ENCODE measurements at regions of chr9 and their contacts with region 1.

Region 1: DNA sequence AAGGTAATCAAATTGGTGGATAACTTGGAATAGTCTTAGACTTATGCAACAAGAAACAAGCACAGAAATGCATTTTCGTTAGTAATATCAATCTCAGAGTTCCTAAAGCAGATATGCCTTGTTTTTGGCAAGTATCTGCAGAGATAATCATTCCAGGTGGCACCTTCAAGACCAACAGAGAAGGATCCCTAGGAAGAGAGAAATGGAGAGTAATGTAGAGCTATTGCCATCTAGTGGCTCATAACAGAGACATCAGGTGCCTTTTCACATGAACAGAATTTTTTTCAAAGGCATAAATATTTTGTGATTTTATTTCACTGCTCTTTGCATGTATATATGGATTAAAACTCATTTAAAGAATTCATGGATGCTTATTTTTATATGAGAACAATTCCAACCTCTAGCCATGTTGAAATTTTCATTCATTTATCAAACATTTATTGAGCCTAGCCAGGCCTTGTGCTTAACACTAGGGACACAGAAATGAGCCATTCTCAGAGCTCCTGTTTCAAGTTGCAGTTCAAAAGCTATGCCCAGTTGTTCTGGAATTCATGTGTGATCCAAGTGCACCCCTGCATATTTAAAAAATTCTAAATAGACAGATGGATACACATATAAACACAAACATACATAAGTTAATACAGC is 117.5 kb upstream of the OR13F1 start:
- DNase-seq: no peak
- ATAC-seq: no peak
- H3K4me3 ChIP-seq: no peak overlapping the region
- H3K27ac ChIP-seq: no peak overlapping the region
- H3K4me1 ChIP-seq: peaks cover 0 to 8% of the 10 kb centered on the region in 2 donors
- H3K27me3 ChIP-seq: no peaks in the 10 kb centered on the region

Region 2: DNA sequence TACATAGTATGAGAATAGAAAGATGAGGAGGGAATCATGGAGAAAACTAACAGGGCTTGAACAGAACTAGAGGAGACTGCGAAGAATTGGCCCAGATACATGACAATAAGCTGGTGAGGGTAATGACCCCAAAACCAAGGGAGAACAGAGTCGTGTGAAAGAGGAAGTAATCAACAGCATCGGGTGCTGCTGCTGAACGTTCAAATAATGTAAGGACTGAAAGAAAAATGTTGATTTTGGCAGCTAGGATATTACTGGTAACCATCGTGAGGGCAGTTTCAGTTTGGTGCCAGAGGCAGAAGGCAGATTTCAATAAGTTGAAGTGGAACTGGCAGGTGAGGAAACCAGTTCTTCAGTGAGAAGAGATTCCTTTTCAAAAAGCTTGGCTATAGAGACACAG is 359.3 kb before region 1 on chr9:
- intact Hi-C with region 1: loop called (anchors 10 kb)
- DNase-seq: no peak
- ATAC-seq: no peak
- H3K4me3 ChIP-seq: no peak overlapping the region
- H3K27ac ChIP-seq: no peak overlapping the region
- H3K4me1 ChIP-seq: no peaks in the 10 kb centered on the region
- H3K27me3 ChIP-seq: no peaks in the 10 kb centered on the region

Region 3: DNA sequence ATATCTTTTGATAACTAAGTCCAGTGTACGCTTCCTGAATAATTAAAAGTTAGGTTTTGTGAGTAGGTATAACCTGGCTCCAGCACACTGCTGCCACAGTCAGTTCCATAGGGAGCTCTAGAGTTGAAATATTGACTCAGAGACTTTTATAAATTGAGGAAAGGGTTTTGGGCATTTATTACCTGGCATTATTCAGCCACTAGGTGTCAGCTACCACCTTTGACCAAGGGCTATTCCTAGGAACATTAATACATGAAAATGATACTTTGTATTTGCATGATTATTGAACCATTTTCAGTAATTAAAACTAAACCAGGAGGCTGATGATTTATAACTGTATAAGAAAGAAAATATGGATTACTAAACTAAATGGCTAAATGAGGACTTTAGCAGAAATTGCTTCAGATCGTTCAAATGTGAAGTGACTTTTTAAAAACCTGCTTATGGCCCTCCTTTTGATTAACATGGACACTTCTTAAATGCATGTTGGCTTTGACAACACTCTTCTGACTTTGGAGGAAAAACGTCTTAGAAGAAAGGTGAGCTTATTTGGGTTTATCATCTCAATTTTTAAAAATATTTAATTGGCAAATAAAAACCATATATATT is 209.4 kb before region 1 on chr9:
- intact Hi-C with region 1: loop called (anchors 2 kb)
- DNase-seq: no peak
- ATAC-seq: no peak
- H3K4me3 ChIP-seq: no peak overlapping the region
- H3K27ac ChIP-seq: no peak overlapping the region
- H3K4me1 ChIP-seq: no peaks in the 10 kb centered on the region
- H3K27me3 ChIP-seq: no peaks in the 10 kb centered on the region

Region 4: DNA sequence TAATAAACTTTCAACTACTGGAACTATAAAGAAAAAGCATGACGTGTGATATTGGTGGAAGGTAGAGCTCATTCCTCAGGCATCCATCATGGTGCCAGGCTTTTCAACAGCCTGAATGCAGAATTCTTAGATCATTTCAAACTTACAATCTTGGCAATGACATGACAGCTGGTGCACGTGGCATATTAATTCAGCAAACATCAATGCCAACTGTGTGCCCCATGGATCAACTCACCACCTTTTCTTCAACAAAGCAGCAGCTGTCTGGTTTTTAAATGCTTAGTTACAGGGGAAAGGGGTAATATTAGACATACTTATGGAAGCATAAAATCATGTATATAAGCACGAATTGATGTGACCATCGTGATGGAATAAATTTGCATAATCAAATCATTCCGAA is 61.5 kb after region 1 on chr9:
- intact Hi-C with region 1: no loop called
- DNase-seq: no peak
- ATAC-seq: no peak
- H3K4me3 ChIP-seq: no peak overlapping the region
- H3K27ac ChIP-seq: no peak overlapping the region
- H3K4me1 ChIP-seq: no peaks in the 10 kb centered on the region
- H3K27me3 ChIP-seq: no peaks in the 10 kb centered on the region

Region 5: DNA sequence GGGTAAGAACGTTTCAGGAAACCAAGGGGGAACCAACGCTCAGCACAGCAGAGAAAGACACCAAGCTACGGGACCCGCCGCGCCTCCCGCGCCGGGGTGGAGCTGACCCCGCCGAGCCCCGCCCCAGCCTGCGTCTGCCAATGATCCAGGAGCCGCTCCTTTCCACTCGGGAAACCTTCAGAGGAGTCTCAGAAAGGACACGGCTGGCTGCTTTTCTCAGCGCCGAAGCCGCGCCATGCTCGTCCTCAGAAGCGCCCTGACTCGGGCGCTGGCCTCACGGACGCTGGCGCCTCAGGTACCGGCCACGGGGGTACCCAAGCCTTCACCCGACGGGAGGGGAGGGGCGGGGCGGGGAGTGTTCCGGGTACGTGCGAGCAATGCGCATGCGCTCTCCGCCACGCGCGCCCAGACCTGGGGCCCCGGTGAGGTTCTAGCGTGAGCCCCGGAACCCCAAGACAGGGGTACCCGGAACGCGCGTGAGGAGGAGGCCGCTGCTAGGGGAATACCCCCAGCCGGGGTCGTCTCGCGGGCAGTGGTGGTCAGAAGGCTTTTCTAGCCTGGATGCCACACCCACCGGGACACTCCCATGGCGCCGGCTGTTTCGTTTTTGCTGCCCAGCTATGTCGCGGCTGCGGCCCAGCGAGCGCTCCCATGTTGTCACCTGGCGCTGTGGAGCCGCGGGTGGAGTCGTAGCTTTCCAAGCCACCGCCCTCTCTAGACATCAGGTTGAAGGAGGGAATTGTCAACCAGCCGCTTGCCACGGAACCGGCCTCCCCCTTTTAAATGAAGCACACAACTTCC is 361.2 kb after region 1 on chr9 and contains the start of gene NIPSNAP3A:
- intact Hi-C with region 1: loop called in 1 of 2 experiments (anchors 10 kb)
- DNase-seq: peak; percentile 92 to 94
- ATAC-seq: peak; percentile 96
- H3K4me3 ChIP-seq: peak within 1 kb of the TSS; percentile 69 to 98
- H3K27ac ChIP-seq: peak within 1 kb of the TSS; percentile 77 to 92
- H3K4me1 ChIP-seq: no peaks in the 10 kb centered on the region
- H3K27me3 ChIP-seq: no peaks in the 10 kb centered on the region
- total RNA-seq, gene NIPSNAP3A: 24.2 to 28.7 TPM